Dendritic cell treated with granulocyte-macrophage colony-stimulating factor and Interleukin-4, amounts not matched to agents 40 ng/mL and 50 ng/mL, for 4 days (primary cell): ENCODE measurements at regions of chr11 and their contacts with region 1.

Region 1: DNA sequence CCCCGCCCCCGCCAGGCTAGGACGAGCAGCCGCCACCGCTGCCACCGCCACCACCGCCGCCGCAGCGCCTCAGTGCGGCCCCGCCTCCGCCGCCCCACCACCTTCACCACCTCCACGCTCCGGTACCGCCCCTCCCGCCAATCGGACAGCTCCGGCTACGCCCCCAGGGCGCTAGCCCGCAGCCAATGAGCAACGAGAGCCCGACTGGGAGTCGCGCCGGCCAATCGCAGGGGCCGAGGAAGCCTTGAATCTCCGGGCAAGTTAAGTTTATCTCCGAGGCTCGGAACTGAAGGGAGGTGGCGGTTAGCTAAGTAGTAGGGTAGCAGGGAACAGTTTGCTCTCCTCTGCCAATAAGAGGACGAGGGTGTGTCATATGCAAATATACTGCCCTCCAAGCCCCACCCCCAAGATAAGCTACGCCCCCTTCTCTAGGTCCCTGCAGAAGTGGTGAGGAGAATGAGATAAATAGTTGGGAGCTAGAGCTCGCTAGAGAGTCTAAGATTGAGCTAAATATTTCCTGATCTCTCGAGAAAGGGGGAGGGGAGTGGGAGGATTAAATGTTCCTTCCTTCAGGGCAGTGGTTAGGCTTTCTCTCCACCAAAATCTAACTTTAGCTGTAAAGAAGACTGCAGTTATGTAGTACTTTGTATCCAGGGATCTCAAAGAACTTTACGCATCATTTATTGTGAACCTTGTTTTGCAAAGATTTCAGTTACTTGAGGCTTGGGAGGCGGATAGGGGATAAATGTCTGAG is at the start of gene SESN3:
- H3K4me3 Mint-ChIP-seq: no peak within 1 kb of the TSS
- H3K27ac Mint-ChIP-seq: no peak within 1 kb of the TSS
- H3K4me1 Mint-ChIP-seq: peaks cover 6% of the 10 kb centered on the region
- H3K27me3 Mint-ChIP-seq: no peaks in the 10 kb centered on the region

Region 2: DNA sequence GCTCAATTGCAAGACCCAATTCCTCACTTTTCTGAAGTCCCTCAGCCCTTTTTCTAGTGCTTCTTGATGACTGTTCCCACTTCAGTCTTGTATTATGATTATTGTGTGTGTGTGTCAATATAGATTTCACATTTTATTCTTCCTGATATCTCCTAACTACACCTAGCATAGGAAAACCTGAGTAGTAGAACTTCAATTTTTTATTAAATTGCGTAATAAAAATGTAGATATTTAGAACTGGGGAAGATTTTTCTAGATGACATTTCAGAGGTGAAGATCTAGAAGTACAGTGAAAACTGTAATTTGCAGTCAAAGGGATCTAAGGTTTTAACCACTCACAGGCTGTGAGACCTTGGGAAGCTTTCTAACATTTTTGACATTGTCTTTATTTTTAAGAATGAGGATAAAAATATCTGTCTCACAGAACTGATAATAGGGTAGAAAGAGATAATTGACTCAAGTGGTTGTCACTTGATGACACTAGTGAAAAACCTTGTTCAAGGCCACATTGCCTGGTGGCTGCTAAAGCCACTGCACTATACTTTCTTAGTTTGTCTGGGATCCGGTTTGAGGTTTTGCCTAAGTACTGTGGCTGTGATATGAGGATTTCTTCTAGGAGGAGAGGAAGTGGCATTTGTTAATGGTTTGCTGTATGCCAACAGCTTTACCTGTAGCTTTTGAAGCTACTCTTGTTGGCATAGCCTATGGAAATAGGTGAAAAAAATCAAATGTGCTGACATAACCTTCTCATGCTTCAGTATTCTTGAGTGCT is 31.9 kb after region 1 on chr11:
- intact Hi-C with region 1: loop called (anchors 5 kb)
- H3K4me3 Mint-ChIP-seq: no peak overlapping the region
- H3K27ac Mint-ChIP-seq: no peak overlapping the region
- H3K4me1 Mint-ChIP-seq: peaks cover 17% of the 10 kb centered on the region
- H3K27me3 Mint-ChIP-seq: no peaks in the 10 kb centered on the region

Region 3: DNA sequence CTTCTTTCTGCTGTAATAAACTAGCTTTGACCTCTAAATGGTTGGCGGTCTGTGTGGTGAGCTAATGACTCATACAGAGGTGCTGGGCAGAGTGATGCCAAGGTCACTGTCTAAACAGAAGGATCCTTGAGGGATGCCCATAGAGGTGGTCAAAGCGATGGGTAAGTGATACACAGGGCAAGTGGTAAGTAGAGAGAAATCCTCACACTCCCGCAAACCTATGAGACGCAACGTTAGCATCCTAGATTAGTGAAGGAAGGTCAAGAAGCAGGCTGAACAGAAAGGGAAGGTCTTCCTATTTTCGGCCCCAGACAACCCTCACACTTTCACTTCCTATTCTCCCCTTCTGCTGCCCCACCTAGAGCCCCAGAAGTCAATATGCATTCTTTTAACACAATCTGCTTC is 65.3 kb after region 1 on chr11:
- intact Hi-C with region 1: loop called (anchors 10 kb)
- H3K4me3 Mint-ChIP-seq: no peak overlapping the region
- H3K27ac Mint-ChIP-seq: no peak overlapping the region
- H3K4me1 Mint-ChIP-seq: peaks cover 33% of the 10 kb centered on the region
- H3K27me3 Mint-ChIP-seq: peaks cover 6% of the 10 kb centered on the region

Region 4: DNA sequence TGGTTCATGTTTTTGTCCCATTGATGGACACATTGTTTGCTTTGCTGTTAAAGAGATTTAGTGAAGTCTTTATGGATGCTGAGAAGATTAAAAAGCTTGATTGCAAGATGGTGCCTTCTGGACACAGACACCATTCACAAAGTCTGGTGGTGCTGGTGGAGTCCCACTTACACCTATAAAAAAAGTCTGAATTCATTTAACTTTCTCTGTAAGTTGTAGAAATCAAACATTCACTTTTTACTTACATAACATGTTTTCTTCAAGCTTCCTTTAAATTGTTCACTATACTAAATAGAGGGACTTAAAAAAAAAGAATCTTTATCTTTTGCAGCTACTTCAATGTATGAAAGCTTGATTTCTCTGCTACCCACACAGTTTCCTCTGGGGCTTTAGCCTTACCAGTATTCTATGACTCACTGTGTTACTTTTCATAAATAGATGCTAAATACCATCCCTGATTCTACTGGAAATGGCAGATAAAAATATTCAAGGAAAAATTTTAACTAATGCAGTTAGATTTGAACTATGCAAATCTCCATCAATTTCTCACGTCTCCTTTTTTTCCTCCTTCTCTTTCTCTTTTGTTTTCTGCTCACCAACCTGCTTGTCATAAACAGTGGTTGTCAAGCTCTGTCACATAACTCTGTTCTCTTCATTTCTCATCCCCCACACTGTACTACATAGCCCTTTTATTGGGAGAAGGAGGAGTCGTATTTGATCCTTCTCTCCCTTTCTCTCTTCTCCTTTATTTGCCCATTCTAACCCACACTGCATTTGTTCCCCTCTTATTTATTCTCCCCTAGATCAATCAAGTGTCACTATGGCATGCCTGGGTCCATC is 468.5 kb after region 1 on chr11:
- intact Hi-C with region 1: loop called (anchors 5 kb)
- H3K4me3 Mint-ChIP-seq: peak overlapping the region; percentile 8
- H3K27ac Mint-ChIP-seq: peak overlapping the region; percentile 1
- H3K4me1 Mint-ChIP-seq: peaks cover 25% of the 10 kb centered on the region
- H3K27me3 Mint-ChIP-seq: no peaks in the 10 kb centered on the region